ENCODE measurements at regions of chr5 and their contacts with region 1.

Region 1: DNA sequence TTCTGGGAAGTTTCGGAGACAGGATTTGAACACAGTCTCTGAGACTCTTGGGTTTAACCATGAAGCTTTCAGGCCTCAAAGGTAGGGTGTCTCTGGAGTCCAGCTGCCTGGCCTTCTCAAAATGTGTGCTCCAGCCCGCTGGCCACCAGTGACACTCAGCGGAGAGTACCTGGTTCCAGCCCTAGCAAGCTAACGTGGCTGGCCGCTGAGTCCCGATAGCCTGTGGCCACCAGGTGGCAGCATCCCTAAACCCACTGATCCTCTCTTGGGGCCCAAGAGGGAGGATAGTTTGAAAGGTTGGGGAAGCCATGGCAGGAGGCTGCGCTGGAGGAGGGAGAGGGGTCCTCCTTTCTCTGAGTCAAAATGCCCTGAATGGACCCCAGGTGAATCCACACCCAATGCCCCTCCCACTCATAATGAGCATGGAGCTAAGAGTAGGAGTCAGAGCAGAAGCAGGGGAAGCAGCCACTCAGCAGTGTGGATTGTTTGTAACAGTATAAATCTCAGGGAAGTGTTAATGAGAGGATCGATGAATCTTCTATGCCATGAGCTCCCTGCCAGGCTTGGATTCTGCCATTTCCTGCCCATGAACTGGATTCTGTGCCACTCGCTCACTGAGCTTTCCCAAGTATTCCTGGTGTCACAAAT is 5.4 kb upstream of the TIFAB start:
- DNase-seq: peak; percentile 66
- H3K4me3 Mint-ChIP-seq: no peak overlapping the region
- H3K27ac Mint-ChIP-seq: no peak overlapping the region
- H3K4me1 Mint-ChIP-seq: no peaks in the 10 kb centered on the region
- H3K27me3 Mint-ChIP-seq: peaks cover 5% of the 10 kb centered on the region

Region 2: DNA sequence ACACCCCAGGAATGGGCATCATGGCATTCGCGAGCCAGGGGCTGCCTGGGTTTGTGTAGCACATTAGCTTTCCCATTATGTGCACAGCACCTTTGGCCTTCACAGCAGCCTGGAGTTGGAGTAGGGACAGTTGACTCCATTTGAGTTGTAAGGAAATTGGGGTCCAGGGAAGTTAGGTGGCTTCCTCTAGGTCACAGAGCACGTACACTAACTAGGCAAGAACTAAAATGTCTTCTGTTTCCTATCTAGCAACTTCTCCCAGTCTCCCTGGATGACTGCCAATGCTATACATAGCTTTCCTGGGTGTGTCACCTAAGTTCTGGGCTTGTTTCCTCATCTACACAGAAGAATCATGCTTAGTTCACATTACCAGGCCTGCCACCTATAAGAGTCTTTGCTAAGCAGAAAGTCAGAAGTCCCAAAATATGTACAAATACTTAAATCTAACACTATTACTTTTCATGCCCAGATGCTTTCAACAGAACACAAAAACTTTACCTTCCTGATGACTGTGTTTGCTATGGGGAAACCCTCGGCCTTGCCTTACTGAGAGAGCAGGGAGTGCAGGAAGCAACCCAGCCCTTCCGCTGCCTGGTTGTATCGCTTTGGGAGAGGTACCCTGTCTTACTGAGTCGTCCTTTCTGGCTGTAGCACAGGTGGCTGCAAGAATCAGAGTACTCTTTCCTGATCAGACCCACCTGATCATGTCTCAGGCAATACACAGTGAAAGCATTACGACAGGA is 70.5 kb before region 1 on chr5:
- CTCF ChIA-PET with region 1: no interaction called
- POLR2A ChIA-PET with region 1: no interaction called
- DNase-seq: no peak
- H3K4me3 Mint-ChIP-seq: no peak overlapping the region
- H3K27ac Mint-ChIP-seq: no peak overlapping the region
- H3K4me1 Mint-ChIP-seq: peaks cover 54% of the 10 kb centered on the region
- H3K27me3 Mint-ChIP-seq: no peaks in the 10 kb centered on the region

Region 3: GRCh38 chr5:135445306-135445985 is 12.1 kb before region 1 on chr5:
- CTCF ChIA-PET with region 1: interaction called, 16 read pairs
- POLR2A ChIA-PET with region 1: no interaction called
- DNase-seq: no peak
- H3K4me3 Mint-ChIP-seq: no peak overlapping the region
- H3K27ac Mint-ChIP-seq: no peak overlapping the region
- H3K4me1 Mint-ChIP-seq: no peaks in the 10 kb centered on the region
- H3K27me3 Mint-ChIP-seq: no peaks in the 10 kb centered on the region

Region 4: GRCh38 chr5:135551593-135552447 is 94.3 kb after region 1 on chr5:
- CTCF ChIA-PET with region 1: interaction called, 80 read pairs
- POLR2A ChIA-PET with region 1: no interaction called
- DNase-seq: peak; percentile 71
- H3K4me3 Mint-ChIP-seq: no peak overlapping the region
- H3K27ac Mint-ChIP-seq: no peak overlapping the region
- H3K4me1 Mint-ChIP-seq: no peaks in the 10 kb centered on the region
- H3K27me3 Mint-ChIP-seq: peaks cover 56% of the 10 kb centered on the region

Region 5: DNA sequence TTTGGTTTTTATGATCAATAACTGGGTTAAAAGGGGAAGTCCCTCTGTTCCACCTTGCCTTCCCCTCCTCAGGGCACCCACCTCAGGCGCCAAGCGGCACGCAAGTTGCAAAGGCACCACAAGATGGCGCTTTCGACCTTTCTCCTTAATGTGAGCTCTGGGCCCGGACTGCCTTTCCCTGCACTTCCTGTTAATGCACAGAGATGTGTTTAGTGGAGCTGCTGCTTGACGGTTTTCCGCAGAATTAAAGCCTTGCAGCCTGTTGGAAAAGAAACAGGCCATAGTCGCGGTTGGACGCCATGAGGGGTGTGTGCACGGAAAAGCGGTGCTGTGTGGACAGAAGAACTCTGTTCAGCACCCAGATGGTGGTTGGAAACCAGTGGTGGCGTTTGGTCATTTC is 103.3 kb after region 1 on chr5:
- CTCF ChIA-PET with region 1: interaction called, 80 read pairs
- POLR2A ChIA-PET with region 1: no interaction called
- DNase-seq: peak; percentile 73
- H3K4me3 Mint-ChIP-seq: no peak overlapping the region
- H3K27ac Mint-ChIP-seq: no peak overlapping the region
- H3K4me1 Mint-ChIP-seq: no peaks in the 10 kb centered on the region
- H3K27me3 Mint-ChIP-seq: peaks cover 17% of the 10 kb centered on the region

Region 6: DNA sequence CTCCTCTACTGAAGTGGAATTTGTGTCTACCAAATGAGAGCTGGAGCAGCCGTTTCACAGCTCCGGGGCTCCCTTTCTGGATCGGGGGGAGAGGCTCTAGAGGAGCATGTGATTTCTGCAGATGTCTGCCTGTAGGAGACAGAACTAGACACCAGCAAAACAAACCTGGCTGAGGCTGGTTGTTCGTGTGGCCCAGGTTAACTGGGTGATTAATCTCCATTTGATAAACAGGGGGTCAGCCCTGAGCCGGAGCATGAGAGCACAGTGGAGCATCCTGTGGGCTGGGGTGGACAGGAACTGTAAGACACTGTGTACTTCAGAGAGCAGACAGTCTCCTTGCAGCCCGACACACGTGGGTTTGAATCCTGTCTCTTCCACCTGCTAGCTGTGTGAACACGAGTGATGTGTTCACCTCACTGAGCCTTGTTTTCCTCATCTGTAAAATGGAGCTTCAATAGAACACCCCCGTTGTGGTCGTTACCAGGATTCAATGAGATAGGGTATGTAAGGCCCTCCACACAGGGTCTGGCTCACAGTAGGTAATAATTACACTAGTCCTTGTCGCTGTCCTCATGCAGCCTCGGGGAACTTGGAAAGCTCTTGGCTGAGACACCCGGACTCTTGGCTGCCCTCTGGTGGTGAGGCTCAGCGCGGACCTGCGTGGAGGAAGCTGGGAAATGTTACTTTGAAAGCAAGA is 108.3 kb after region 1 on chr5:
- CTCF ChIA-PET with region 1: interaction called, 25 read pairs
- POLR2A ChIA-PET with region 1: no interaction called
- DNase-seq: peak; percentile 70
- H3K4me3 Mint-ChIP-seq: no peak overlapping the region
- H3K27ac Mint-ChIP-seq: no peak overlapping the region
- H3K4me1 Mint-ChIP-seq: peaks cover 8% of the 10 kb centered on the region
- H3K27me3 Mint-ChIP-seq: peaks cover under 1% of the 10 kb centered on the region